HepG2 (cell line): ENCODE measurements at regions of chr6 and their contacts with region 1.

Region 1: GRCh38 chr6:8888468-8888867 is 453.1 kb upstream of the SLC35B3 start:
- DNase-seq: peak; percentile 16
- ATAC-seq: peak; percentile 87
- H3K4me3 ChIP-seq: no peak overlapping the region
- H3K27ac ChIP-seq: no peak overlapping the region
- H3K4me1 ChIP-seq: no peaks in the 10 kb centered on the region
- H3K27me3 ChIP-seq: no peaks in the 10 kb centered on the region
- CTCF ChIP-seq: peak; percentile 65
- EP300 ChIP-seq: no peak
- POLR2A ChIP-seq: no peak
- RAD21 ChIP-seq: 0 out of 2 replicates have a peak, but pooled peaks have one; percentile 35

Region 2: GRCh38 chr6:8499540-8499939 is 388.9 kb before region 1 on chr6:
- CTCF ChIA-PET with region 1: no interaction called
- POLR2A ChIA-PET with region 1: no interaction called
- in situ Hi-C with region 1: no loop called
- intact Hi-C with region 1: loop called (anchors 1 kb)
- DNase-seq: peak; percentile 10
- ATAC-seq: no peak
- H3K4me3 ChIP-seq: no peak overlapping the region
- H3K27ac ChIP-seq: no peak overlapping the region
- H3K4me1 ChIP-seq: no peaks in the 10 kb centered on the region
- H3K27me3 ChIP-seq: no peaks in the 10 kb centered on the region
- CTCF ChIP-seq: peak; percentile 53
- EP300 ChIP-seq: no peak
- POLR2A ChIP-seq: no peak
- RAD21 ChIP-seq: no peak

Region 3: GRCh38 chr6:8539446-8539845 is 349.0 kb before region 1 on chr6:
- CTCF ChIA-PET with region 1: interaction called, 10 read pairs
- POLR2A ChIA-PET with region 1: no interaction called
- in situ Hi-C with region 1: no loop called
- intact Hi-C with region 1: no loop called
- DNase-seq: peak; percentile 28
- ATAC-seq: peak; percentile 75
- H3K4me3 ChIP-seq: no peak overlapping the region
- H3K27ac ChIP-seq: no peak overlapping the region
- H3K4me1 ChIP-seq: no peaks in the 10 kb centered on the region
- H3K27me3 ChIP-seq: no peaks in the 10 kb centered on the region
- CTCF ChIP-seq: peak; percentile 54
- EP300 ChIP-seq: no peak
- POLR2A ChIP-seq: no peak
- RAD21 ChIP-seq: peak; percentile 66

Region 4: DNA sequence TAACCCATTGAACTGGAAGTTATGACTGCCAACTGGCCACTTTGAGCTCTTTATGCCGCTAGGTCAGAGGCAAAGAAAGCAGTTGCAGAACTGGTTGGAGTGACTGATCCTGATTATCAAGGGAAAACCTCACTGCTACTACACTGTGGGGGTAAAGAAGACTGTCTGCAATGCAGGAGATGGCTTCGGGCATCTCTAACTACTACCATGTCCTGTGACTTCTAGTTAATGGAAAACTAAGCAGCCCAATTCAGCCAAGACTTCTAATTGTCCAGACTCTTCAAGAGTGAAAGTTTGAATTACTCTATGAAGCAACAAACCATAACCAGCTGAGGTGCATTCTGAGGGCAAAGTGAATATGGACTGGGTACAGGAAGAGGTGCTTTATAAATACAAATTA is 320.5 kb after region 1 on chr6:
- CTCF ChIA-PET with region 1: no interaction called
- POLR2A ChIA-PET with region 1: no interaction called
- in situ Hi-C with region 1: no loop called
- intact Hi-C with region 1: no loop called
- DNase-seq: no peak
- ATAC-seq: no peak
- H3K4me3 ChIP-seq: no peak overlapping the region
- H3K27ac ChIP-seq: no peak overlapping the region
- H3K4me1 ChIP-seq: no peaks in the 10 kb centered on the region
- H3K27me3 ChIP-seq: no peaks in the 10 kb centered on the region
- CTCF ChIP-seq: no peak
- EP300 ChIP-seq: no peak
- POLR2A ChIP-seq: no peak
- RAD21 ChIP-seq: no peak